Sigmoid colon (tissue), 7 donors: ENCODE measurements at regions of chr13 and their contacts with region 1.

Region 1: GRCh38 chr13:99200432-99201167 is at the start of gene UBAC2:
- DNase-seq: peak; percentile 97
- H3K4me3 ChIP-seq: peak within 1 kb of the TSS; percentile 67 to 92 (median 88)
- H3K27ac ChIP-seq: peak within 1 kb of the TSS; percentile 90 to 97 (median 96)
- H3K4me1 ChIP-seq: peaks cover 0 to 34% (median 10%) of the 10 kb centered on the region in 4 donors
- H3K27me3 ChIP-seq: no peaks in the 10 kb centered on the region
- CTCF ChIP-seq: peak in 2 of 4 experiments; percentile 6 to 15
- EP300 ChIP-seq: no peak
- POLR2A ChIP-seq: peak; percentile 87 to 88
- total RNA-seq, gene UBAC2: 47.4 to 54.6 (median 49.2) TPM

Region 2: GRCh38 chr13:98938801-98939200 is 261.8 kb before region 1 on chr13:
- intact Hi-C with region 1: no loop called
- DNase-seq: no peak
- H3K4me3 ChIP-seq: no peak overlapping the region
- H3K27ac ChIP-seq: peak overlapping the region in 3 of 4 donors; percentile 22 to 58 (median 36)
- H3K4me1 ChIP-seq: peaks cover 0 to 31% (median 11%) of the 10 kb centered on the region in 4 donors
- H3K27me3 ChIP-seq: no peaks in the 10 kb centered on the region
- CTCF ChIP-seq: no peak
- EP300 ChIP-seq: no peak
- POLR2A ChIP-seq: no peak

Region 3: DNA sequence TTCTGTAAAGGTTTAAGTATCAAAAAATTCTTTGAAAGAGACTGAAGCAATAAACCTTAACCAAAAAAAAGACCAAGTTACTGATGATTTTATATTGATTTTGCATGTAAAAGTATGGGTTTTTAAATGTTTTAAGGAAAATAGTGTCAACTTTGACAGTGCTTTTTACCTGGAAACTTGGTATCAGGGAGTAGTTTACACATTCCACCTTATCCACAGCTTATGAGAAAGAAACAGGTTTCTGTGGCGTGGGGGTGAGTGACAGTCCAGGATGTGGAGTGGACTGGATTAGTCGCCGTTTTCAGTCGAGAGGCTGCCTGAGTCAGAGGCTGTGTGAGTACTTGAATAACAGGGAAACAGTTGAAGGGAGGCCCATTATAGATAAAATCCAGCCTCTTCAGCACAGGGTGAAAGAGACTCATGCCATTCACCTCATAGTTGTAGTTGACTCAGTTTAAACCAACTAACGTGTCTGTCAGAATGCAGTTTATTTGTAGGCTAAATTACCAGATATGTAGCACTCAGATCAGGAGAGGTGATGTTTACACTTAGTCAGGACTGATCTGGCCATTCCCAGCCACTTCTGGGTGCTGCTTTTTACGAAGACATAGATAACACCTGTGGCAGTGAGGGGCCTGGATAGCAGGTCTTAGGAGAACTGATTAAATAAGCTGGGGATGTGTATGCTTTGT is 107.2 kb after region 1 on chr13:
- intact Hi-C with region 1: loop called (anchors 5 kb)
- DNase-seq: no peak
- H3K4me3 ChIP-seq: peak overlapping the region in 2 of 4 donors; percentile 48 to 50
- H3K27ac ChIP-seq: peak overlapping the region; percentile 64 to 83 (median 76)
- H3K4me1 ChIP-seq: peaks cover 0 to 63% (median 41%) of the 10 kb centered on the region in 4 donors
- H3K27me3 ChIP-seq: no peaks in the 10 kb centered on the region
- CTCF ChIP-seq: no peak
- EP300 ChIP-seq: no peak
- POLR2A ChIP-seq: no peak